ENCODE measurements at regions of chr12 and their contacts with region 1.

Region 1: GRCh38 chr12:122064025-122064777 is 14.4 kb upstream of the MLXIP start:
- DNase-seq: peak; percentile 90
- ATAC-seq: peak; percentile 40
- H3K4me3 ChIP-seq: no peak overlapping the region
- H3K27ac ChIP-seq: peak overlapping the region; percentile 89; the same call in 1 of the 2 replicates
- H3K4me1 ChIP-seq: peaks cover 38% of the 10 kb centered on the region
- H3K27me3 ChIP-seq: no peaks in the 10 kb centered on the region
- CTCF ChIP-seq: peak; percentile 39
- POLR2A ChIP-seq: no peak
- RAD21 ChIP-seq: peak; percentile 15; the same call in 1 of the 2 replicates

Region 2: GRCh38 chr12:122078141-122079032 is 14.2 kb after region 1 on chr12 and contains the start of gene MLXIP:
- CTCF ChIA-PET with region 1: interaction called, 4 read pairs
- POLR2A ChIA-PET with region 1: interaction called, 10 read pairs
- dilution Hi-C with region 1: no loop called
- in situ Hi-C with region 1: no loop called
- intact Hi-C with region 1: no loop called
- DNase-seq: peak; percentile 89
- ATAC-seq: peak; percentile 81
- H3K4me3 ChIP-seq: peak within 1 kb of the TSS; percentile 86
- H3K27ac ChIP-seq: peak within 1 kb of the TSS; percentile 62
- H3K4me1 ChIP-seq: peaks cover 10% of the 10 kb centered on the region
- H3K27me3 ChIP-seq: peaks cover 4% of the 10 kb centered on the region; the same call in 1 of the 2 replicates
- CTCF ChIP-seq: no peak
- POLR2A ChIP-seq: peak; percentile 95
- RAD21 ChIP-seq: peak; percentile 1; the same call in 1 of the 2 replicates
- total RNA-seq, gene MLXIP: 2.7 and 3.1 TPM in 2 replicates

Region 3: GRCh38 chr12:122097927-122098756 is 33.9 kb after region 1 on chr12:
- CTCF ChIA-PET with region 1: no interaction called
- POLR2A ChIA-PET with region 1: no interaction called
- dilution Hi-C with region 1: no loop called
- in situ Hi-C with region 1: no loop called
- intact Hi-C with region 1: loop called (anchors 2 kb)
- DNase-seq: peak; percentile 70
- ATAC-seq: peak; percentile 65
- H3K4me3 ChIP-seq: no peak overlapping the region
- H3K27ac ChIP-seq: peak overlapping the region; percentile 18; the same call in 1 of the 2 replicates
- H3K4me1 ChIP-seq: peaks cover 36% of the 10 kb centered on the region
- H3K27me3 ChIP-seq: no peaks in the 10 kb centered on the region
- CTCF ChIP-seq: no peak
- POLR2A ChIP-seq: no peak
- RAD21 ChIP-seq: no peak

Region 4: DNA sequence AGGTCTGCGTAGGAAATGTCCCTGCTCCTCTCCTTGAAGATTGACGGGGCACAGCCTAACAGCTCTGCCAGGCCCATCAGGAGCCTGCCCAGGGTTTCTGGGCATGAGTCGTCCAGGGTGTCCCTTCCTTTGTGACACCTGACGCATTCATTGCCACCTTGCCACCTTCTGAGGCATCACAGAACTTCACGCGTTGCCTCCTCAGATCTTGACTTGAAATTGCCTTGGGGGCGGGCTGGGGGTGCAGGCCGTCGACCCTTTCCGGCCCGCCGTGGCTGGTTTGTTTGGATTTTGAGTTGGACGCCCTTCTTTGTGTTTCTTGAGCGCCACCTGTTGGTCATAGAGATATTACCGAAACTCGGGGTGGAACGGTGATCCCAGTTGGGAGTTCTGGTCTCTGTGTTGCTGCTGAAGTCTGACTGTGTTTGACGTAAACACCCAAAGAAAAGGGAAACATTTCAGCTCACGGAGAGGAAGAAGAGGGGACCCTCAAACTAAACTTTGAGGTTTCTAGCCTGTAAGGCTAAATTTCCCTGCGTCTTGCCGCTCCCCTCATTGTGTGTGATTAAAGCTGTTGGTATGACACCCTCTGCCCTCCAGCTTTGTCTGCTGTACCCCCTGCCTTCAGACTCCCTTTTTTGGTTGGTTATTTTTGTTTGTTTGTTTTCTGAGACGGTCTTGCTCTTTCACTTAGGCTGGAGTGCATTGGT is 59.0 kb after region 1 on chr12:
- CTCF ChIA-PET with region 1: interaction called, 4 read pairs
- POLR2A ChIA-PET with region 1: no interaction called
- dilution Hi-C with region 1: no loop called
- in situ Hi-C with region 1: loop called (anchors 5 kb)
- intact Hi-C with region 1: loop called (anchors 2 kb)
- DNase-seq: peak; percentile 66
- ATAC-seq: peak; percentile 79
- H3K4me3 ChIP-seq: no peak overlapping the region
- H3K27ac ChIP-seq: no peak overlapping the region
- H3K4me1 ChIP-seq: peaks cover 7% of the 10 kb centered on the region; the same call in 1 of the 2 replicates
- H3K27me3 ChIP-seq: no peaks in the 10 kb centered on the region
- CTCF ChIP-seq: peak; percentile 79
- POLR2A ChIP-seq: no peak
- RAD21 ChIP-seq: peak; percentile 86